GM12878 (cell line): ENCODE measurements at regions of chr6 and their contacts with region 1.

Region 1: GRCh38 chr6:166375013-166375412 is 7.7 kb downstream of the MPC1 start:
- DNase-seq: no peak
- ATAC-seq: no peak
- H3K4me3 ChIP-seq: no peak overlapping the region
- H3K27ac ChIP-seq: no peak overlapping the region
- H3K4me1 ChIP-seq: no peaks in the 10 kb centered on the region
- H3K27me3 ChIP-seq: no peaks in the 10 kb centered on the region
- CTCF ChIP-seq: no peak
- EP300 ChIP-seq: no peak
- POLR2A ChIP-seq: no peak
- RAD21 ChIP-seq: no peak

Region 2: DNA sequence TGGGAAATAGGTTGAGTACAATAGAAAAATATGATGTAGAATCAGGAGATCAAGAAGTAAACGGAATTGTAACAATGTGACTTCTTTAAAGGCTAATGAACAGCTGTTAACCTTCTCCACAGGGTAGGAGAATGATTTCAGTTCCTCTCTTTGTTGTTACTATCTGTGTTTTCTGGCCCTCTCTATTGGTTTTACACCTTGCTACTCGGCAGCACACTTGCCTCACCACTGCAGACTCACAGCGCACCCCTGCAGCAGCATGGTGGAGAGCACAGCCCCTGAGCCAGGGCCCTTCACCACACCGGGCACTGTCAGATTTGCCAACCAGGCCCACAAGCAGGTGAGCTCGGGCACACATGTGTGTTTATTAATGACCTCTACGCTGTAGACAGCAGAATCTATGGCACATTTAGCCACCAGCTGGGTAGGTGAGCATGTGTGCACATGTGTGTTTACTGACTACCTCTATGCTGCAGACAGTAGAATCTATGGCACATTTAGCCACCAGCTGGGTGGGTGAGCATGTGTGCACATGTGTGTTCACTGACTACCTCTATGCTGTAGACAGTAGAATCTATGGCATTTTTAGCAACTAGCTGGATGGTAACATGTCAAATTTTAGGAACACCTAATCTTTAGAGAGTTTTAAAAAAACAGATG is 49.5 kb before region 1 on chr6:
- CTCF ChIA-PET with region 1: interaction called, 45 read pairs
- POLR2A ChIA-PET with region 1: interaction called, 8 read pairs
- RAD21 ChIA-PET with region 1: interaction called, 45 read pairs
- SMC1A ChIA-PET with region 1: interaction called, 36 read pairs
- in situ Hi-C with region 1: loop called (anchors 5 kb)
- intact Hi-C with region 1: no loop called
- DNase-seq: peak; percentile 43
- ATAC-seq: peak; percentile 96
- H3K4me3 ChIP-seq: no peak overlapping the region
- H3K27ac ChIP-seq: peak overlapping the region; percentile 4; the same call in 1 of the 2 replicates
- H3K4me1 ChIP-seq: peaks cover 11% of the 10 kb centered on the region
- H3K27me3 ChIP-seq: no peaks in the 10 kb centered on the region
- CTCF ChIP-seq: no peak; a peak in 1 of 6 replicates
- EP300 ChIP-seq: peak; percentile 60 to 84; a peak in 3 of 4 replicates
- POLR2A ChIP-seq: no peak
- RAD21 ChIP-seq: no peak